ENCODE measurements at regions of chr10 and their contacts with region 1.

Region 1: GRCh38 chr10:63465293-63466143 is at the start of gene JMJD1C:
- DNase-seq: peak; percentile 87 to 94
- ATAC-seq: peak; percentile 96
- H3K4me3 ChIP-seq: peak within 1 kb of the TSS; percentile 60 to 79
- H3K27ac ChIP-seq: peak within 1 kb of the TSS; percentile 58 to 68
- H3K4me1 ChIP-seq: peaks cover 0 to 2% of the 10 kb centered on the region in 2 donors
- H3K27me3 ChIP-seq: no peaks in the 10 kb centered on the region
- total RNA-seq, gene JMJD1C: 103 to 108 TPM

Region 2: GRCh38 chr10:63268798-63269503 is 196.6 kb before region 1 on chr10:
- intact Hi-C with region 1: loop called (anchors 5 to 10 kb)
- DNase-seq: peak in 1 of 2 donors; percentile 86
- ATAC-seq: peak; percentile 94
- H3K4me3 ChIP-seq: peak overlapping the region; percentile 71 to 96
- H3K27ac ChIP-seq: peak overlapping the region; percentile 73 to 99
- H3K4me1 ChIP-seq: no peaks in the 10 kb centered on the region
- H3K27me3 ChIP-seq: no peaks in the 10 kb centered on the region

Region 3: DNA sequence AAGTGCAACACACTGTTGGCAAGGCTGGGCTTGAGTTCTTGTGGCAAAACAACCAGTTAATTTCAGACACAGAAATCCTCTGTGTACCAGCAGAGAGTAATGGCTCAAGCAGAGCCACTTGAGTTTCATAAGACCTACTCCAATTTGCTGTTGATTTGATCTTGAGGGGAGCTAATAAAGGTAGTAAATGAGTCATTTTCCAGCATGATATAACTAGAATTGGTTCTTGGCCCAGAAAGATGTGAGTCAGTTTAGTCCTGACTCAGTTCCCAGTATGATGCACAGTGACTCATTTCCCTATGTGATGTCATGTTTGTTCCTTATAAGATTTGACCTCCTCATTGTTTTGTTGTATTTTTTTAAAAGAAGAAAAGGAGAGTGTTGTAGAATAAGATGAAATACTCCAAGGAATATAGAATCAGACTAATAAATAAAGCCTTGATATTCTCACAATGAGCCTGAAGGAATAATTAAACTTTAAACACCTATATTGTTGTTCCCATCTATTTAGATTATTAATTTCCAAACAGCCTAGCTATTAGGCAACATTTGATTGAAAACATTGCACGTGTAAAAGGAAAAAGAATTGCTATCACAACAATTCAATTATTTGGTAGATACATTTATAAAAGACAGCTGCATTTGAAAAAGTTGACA is 241.9 kb after region 1 on chr10:
- intact Hi-C with region 1: loop called in 1 of 2 experiments (anchors 5 kb)
- DNase-seq: no peak
- ATAC-seq: peak; percentile 87
- H3K4me3 ChIP-seq: no peak overlapping the region
- H3K27ac ChIP-seq: peak overlapping the region in 1 of 2 donors; percentile 46
- H3K4me1 ChIP-seq: peaks cover 2 to 8% of the 10 kb centered on the region in 2 donors
- H3K27me3 ChIP-seq: no peaks in the 10 kb centered on the region